Activated CD8-positive, alpha-beta T cell treated with anti-CD3 and anti-CD28 coated beads, Interleukin-2, amount 10 ng/mL, durations not matched to agents 7 days and 5 days (primary cell): ENCODE measurements at regions of chr5 and their contacts with region 1.

Region 1: DNA sequence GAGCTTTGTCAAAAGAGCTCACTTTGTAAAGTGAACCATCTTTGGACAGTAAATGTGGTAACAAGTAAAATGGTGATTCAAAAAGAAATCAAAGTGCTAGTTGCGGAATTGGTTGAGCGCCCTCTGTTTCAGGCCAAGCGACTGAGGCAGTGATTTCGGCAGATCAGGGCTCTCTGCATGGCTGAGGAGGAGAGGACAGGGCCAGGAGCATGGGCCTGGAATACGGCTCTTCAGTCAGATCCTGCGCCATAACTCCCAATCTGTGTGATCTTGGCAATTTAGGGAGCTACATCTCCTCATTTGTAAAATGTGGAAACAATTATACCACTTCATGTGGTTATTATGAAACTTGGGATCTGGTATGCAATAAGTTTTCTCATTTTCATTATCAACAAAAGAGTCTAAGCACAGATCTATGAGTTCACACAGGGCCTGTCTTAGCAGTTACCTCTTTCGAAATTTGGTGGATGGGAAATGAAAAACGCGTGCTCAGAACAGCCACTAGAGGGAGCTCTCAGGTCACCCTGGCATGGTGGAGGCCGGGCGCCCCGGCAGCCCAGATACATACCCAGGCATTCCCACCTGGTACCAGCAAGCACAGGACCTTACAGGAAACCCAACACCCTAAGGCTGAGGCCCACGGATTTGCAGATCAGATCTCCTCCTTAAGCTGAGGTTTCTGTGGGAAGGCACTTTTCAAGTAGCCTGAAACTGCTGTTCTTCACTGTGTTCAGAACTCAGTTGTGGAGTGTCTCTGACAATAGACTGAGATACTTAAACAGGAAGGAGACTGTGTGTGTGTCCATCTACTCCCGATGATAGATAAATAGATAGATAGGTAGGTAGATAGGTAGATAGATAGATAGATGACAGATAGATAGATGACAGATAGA is 303.7 kb downstream of the RAB3C start:
- DNase-seq: peak; percentile 73
- ATAC-seq: peak; percentile 90
- H3K4me3 Mint-ChIP-seq: no peak overlapping the region
- H3K27ac Mint-ChIP-seq: peak overlapping the region; percentile 27
- H3K4me1 Mint-ChIP-seq: peaks cover 24% of the 10 kb centered on the region
- H3K27me3 Mint-ChIP-seq: peaks cover 16% of the 10 kb centered on the region

Region 2: GRCh38 chr5:58871648-58872242 is 14.8 kb before region 1 on chr5:
- CTCF ChIA-PET with region 1: interaction called, 33 read pairs
- POLR2A ChIA-PET with region 1: no interaction called
- DNase-seq: peak; percentile 53
- ATAC-seq: no peak
- H3K4me3 Mint-ChIP-seq: no peak overlapping the region
- H3K27ac Mint-ChIP-seq: no peak overlapping the region
- H3K4me1 Mint-ChIP-seq: no peaks in the 10 kb centered on the region
- H3K27me3 Mint-ChIP-seq: peaks cover 25% of the 10 kb centered on the region

Region 3: GRCh38 chr5:58902765-58903164 is 16.2 kb after region 1 on chr5:
- CTCF ChIA-PET with region 1: interaction called, 14 read pairs
- POLR2A ChIA-PET with region 1: no interaction called
- DNase-seq: no peak
- ATAC-seq: no peak
- H3K4me3 Mint-ChIP-seq: no peak overlapping the region
- H3K27ac Mint-ChIP-seq: no peak overlapping the region
- H3K4me1 Mint-ChIP-seq: no peaks in the 10 kb centered on the region
- H3K27me3 Mint-ChIP-seq: peaks cover 13% of the 10 kb centered on the region

Region 4: GRCh38 chr5:58944221-58944620 is 57.7 kb after region 1 on chr5:
- CTCF ChIA-PET with region 1: interaction called, 14 read pairs
- POLR2A ChIA-PET with region 1: no interaction called
- DNase-seq: no peak
- ATAC-seq: no peak
- H3K4me3 Mint-ChIP-seq: no peak overlapping the region
- H3K27ac Mint-ChIP-seq: no peak overlapping the region
- H3K4me1 Mint-ChIP-seq: no peaks in the 10 kb centered on the region
- H3K27me3 Mint-ChIP-seq: peaks cover 13% of the 10 kb centered on the region

Region 5: GRCh38 chr5:59126708-59127573 is 240.4 kb after region 1 on chr5:
- CTCF ChIA-PET with region 1: interaction called, 11 read pairs
- POLR2A ChIA-PET with region 1: interaction called, 4 read pairs
- DNase-seq: no peak
- ATAC-seq: peak; percentile 35
- H3K4me3 Mint-ChIP-seq: no peak overlapping the region
- H3K27ac Mint-ChIP-seq: no peak overlapping the region
- H3K4me1 Mint-ChIP-seq: peaks cover 19% of the 10 kb centered on the region
- H3K27me3 Mint-ChIP-seq: no peaks in the 10 kb centered on the region

Region 6: GRCh38 chr5:59180515-59180914 is 294.0 kb after region 1 on chr5:
- CTCF ChIA-PET with region 1: interaction called, 71 read pairs
- POLR2A ChIA-PET with region 1: no interaction called
- DNase-seq: no peak
- ATAC-seq: no peak
- H3K4me3 Mint-ChIP-seq: no peak overlapping the region
- H3K27ac Mint-ChIP-seq: no peak overlapping the region
- H3K4me1 Mint-ChIP-seq: peaks cover 18% of the 10 kb centered on the region
- H3K27me3 Mint-ChIP-seq: peaks cover 27% of the 10 kb centered on the region

Region 7: GRCh38 chr5:59367791-59368394 is 481.3 kb after region 1 on chr5:
- CTCF ChIA-PET with region 1: interaction called, 10 read pairs
- POLR2A ChIA-PET with region 1: no interaction called
- DNase-seq: peak; percentile 62
- ATAC-seq: no peak
- H3K4me3 Mint-ChIP-seq: no peak overlapping the region
- H3K27ac Mint-ChIP-seq: no peak overlapping the region
- H3K4me1 Mint-ChIP-seq: no peaks in the 10 kb centered on the region
- H3K27me3 Mint-ChIP-seq: peaks cover 25% of the 10 kb centered on the region